ENCODE measurements at regions of chr6 and their contacts with region 1.

Region 1: DNA sequence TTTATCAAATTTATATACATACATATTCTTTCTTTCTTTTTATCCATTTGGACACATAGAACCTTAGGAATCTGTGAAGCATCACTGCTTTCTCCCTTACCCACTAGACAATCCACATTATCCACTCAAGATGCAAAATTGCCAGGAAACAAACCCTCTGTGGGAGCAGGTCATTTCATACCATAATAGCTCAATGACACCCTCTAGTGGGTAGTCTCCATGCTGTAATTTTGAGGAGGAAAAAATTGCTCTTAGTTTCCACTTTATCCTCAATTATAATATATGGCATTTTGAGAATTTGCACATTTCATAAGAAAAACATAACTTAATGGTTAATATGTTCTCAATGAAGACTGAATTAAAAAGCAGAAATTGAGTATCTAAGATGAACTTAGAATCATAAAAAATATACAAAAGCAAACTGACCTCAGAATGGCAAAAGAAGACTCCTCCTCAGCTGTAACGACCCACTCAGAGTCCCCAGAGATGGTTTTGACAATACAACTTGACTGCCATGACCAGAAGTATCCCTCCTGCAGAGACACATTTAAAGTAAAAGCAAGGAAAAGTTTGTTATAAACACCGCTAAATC is 164.1 kb downstream of the FRK start:
- DNase-seq: no peak
- H3K4me3 Mint-ChIP-seq: no peak overlapping the region
- H3K27ac Mint-ChIP-seq: no peak overlapping the region
- H3K4me1 Mint-ChIP-seq: no peaks in the 10 kb centered on the region
- H3K27me3 Mint-ChIP-seq: no peaks in the 10 kb centered on the region

Region 2: GRCh38 chr6:114747987-114748630 is 1148.5 kb before region 1 on chr6:
- intact Hi-C with region 1: loop called (anchors 1 kb)
- DNase-seq: no peak
- H3K4me3 Mint-ChIP-seq: no peak overlapping the region
- H3K27ac Mint-ChIP-seq: no peak overlapping the region
- H3K4me1 Mint-ChIP-seq: no peaks in the 10 kb centered on the region
- H3K27me3 Mint-ChIP-seq: no peaks in the 10 kb centered on the region

Region 3: GRCh38 chr6:114997813-114998292 is 898.8 kb before region 1 on chr6:
- intact Hi-C with region 1: loop called (anchors 10 kb)
- DNase-seq: no peak
- H3K4me3 Mint-ChIP-seq: no peak overlapping the region
- H3K27ac Mint-ChIP-seq: no peak overlapping the region
- H3K4me1 Mint-ChIP-seq: peaks cover 26% of the 10 kb centered on the region
- H3K27me3 Mint-ChIP-seq: no peaks in the 10 kb centered on the region

Measured in activated T-helper 1 cell treated with anti-CD3 and anti-CD28 coated beads, Interleukin-12 subunit alpha, Interleukin-12 subunit beta, Interleukin-2, Interleukin-4 antibody, amounts not matched to agents 30 ng/mL and 10 ng/mL and 1 ng/mL, durations not matched to agents 14 hours and 24 hours and 36 hours (primary cell).